ENCODE measurements at regions of chr6 and their contacts with region 1.

Region 1: DNA sequence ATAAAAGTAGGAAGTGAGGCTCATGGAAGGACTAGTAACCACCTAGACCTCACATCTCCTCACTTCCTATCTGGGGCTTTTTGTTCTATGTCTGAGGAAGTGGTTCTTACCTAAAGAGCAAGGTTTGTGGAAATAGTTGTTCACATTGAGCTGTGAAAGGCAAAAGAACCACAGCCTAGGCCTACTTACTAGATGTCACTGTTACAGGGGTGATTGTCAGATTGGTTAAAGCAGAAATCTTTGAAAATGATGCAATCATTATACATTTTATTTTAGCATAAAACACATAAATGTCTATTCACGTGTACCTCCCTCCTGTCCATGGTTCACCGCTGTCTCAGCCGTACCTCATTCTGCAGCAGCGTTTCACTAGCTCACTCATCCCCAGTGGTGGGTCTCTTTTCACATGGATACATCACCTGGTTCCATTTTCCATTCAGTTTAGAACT is 268.8 kb downstream of the TMEM242 start:
- DNase-seq: peak; percentile 76
- ATAC-seq: peak; percentile 90
- H3K4me3 ChIP-seq: no peak overlapping the region
- H3K4me3 Mint-ChIP-seq: peak overlapping the region; percentile 27
- H3K27ac ChIP-seq: peak overlapping the region; percentile 42 to 81
- H3K27ac Mint-ChIP-seq: peak overlapping the region; percentile 73
- H3K4me1 ChIP-seq: peaks cover 17 to 24% of the 10 kb centered on the region in 2 donors
- H3K4me1 Mint-ChIP-seq: peaks cover 53% of the 10 kb centered on the region
- H3K27me3 ChIP-seq: no peaks in the 10 kb centered on the region
- H3K27me3 Mint-ChIP-seq: no peaks in the 10 kb centered on the region
- CTCF ChIP-seq: no peak

Region 2: DNA sequence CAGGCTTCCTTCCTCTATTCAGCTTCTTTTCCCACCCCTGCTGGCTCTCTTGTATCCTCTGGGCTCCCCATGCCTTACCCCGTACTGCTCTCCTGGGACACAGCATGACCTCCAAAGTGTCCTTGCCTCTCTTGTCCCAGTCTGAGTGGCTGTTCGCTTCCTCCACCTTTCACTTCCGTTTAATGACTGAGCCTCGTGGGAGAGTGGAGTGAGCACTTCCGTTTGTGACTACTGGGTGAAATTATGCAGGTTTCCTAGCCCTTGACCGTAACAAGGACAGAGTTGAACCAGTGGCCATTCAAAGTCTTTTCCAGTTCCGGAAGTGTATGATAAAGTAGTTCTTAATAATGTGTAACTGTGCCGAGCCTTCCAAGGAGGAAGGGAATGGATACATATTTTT is 168.1 kb before region 1 on chr6:
- CTCF ChIA-PET with region 1: no interaction called
- POLR2A ChIA-PET with region 1: no interaction called
- intact Hi-C with region 1: no loop called
- DNase-seq: peak; percentile 32
- ATAC-seq: peak; percentile 28
- H3K4me3 ChIP-seq: no peak overlapping the region
- H3K4me3 Mint-ChIP-seq: peak overlapping the region; percentile 17
- H3K27ac ChIP-seq: peak overlapping the region in 1 of 2 donors; percentile 32
- H3K27ac Mint-ChIP-seq: peak overlapping the region; percentile 5
- H3K4me1 ChIP-seq: peaks cover 47 to 50% of the 10 kb centered on the region in 2 donors
- H3K4me1 Mint-ChIP-seq: peaks cover 84% of the 10 kb centered on the region
- H3K27me3 ChIP-seq: no peaks in the 10 kb centered on the region
- H3K27me3 Mint-ChIP-seq: no peaks in the 10 kb centered on the region
- CTCF ChIP-seq: no peak

Region 3: DNA sequence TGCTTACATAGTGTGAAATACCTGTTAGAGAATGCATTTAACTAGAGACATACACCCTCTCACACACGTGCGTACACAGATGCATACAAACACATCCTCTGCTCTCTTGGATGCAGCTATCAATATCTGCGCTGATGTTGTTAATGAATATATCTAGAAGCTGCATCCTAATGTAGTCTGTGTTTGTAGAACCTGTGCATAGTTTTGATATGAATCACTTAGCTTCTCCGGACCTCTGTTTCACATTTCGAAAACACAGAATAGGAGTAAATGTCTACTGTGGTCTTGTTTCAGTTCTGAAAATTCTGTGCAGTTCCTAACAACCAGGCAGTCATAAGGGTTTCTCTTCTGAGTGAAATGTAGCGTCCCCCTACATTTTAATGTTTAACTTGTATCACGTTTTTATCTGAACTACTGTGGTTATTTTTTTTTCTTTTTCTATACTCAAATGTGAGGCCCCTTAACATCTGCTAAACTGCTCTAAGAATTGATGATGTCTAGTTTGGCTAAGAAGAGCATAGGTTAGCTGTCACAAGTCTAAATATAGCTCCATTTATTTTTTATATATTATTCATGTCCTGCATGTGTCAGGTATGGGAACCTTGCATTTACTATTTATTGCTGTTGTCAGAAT is 14.3 kb after region 1 on chr6:
- CTCF ChIA-PET with region 1: interaction called, 12 read pairs
- POLR2A ChIA-PET with region 1: interaction called, 5 read pairs
- intact Hi-C with region 1: no loop called
- DNase-seq: no peak
- ATAC-seq: peak; percentile 53
- H3K4me3 ChIP-seq: no peak overlapping the region
- H3K4me3 Mint-ChIP-seq: peak overlapping the region; percentile 62
- H3K27ac ChIP-seq: peak overlapping the region in 1 of 2 donors; percentile 7
- H3K27ac Mint-ChIP-seq: peak overlapping the region; percentile 33
- H3K4me1 ChIP-seq: peaks cover 45 to 50% of the 10 kb centered on the region in 2 donors
- H3K4me1 Mint-ChIP-seq: peaks cover 77% of the 10 kb centered on the region
- H3K27me3 ChIP-seq: no peaks in the 10 kb centered on the region
- H3K27me3 Mint-ChIP-seq: no peaks in the 10 kb centered on the region
- CTCF ChIP-seq: no peak

Region 4: DNA sequence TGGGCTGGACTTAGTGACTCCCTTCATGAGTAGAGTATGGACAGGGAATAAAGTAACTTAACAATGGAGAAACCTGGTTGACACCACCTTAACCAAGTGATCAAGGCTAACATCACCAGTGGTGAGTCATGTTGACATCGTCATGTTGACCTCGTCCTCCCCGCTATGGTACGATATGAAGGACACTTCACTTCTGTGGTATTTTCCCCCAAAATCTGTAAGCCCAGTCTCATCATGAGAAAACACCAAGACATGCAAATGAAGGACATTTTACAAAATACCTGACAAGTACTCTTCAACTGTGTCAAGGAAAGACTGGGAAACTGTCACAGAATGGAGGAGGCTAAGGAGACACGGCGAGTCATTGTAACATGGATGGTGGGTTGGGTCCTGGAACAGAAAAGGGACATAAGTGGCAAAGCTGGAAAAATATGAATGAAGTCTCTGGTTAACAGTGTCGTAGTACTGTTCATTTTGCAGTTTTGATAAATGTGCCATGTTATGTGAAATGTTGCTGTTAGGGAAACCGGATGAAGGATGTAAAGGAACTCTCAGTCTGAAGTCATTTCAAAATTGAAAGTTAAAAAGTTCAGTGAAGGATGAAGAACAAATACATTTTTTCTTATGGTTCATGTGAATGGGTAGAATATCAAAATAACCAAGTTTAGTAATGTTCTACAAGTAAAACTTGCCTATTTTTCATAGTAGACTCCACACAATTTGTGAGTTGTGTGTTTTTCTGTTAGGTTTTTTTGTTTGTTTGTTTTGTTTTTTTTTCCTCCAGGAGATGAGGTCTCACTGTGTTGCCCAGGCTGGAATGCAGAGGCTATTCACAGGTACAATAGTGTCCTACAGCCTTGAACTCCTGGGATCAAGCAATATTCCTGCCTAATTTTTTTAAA is 21.2 kb after region 1 on chr6:
- CTCF ChIA-PET with region 1: no interaction called
- POLR2A ChIA-PET with region 1: no interaction called
- intact Hi-C with region 1: loop called (anchors 2 kb)
- DNase-seq: no peak
- ATAC-seq: peak; percentile 28
- H3K4me3 ChIP-seq: peak overlapping the region in 1 of 5 experiments; percentile 36
- H3K4me3 Mint-ChIP-seq: peak overlapping the region; percentile 86
- H3K27ac ChIP-seq: peak overlapping the region; percentile 37 to 44
- H3K27ac Mint-ChIP-seq: peak overlapping the region; percentile 76
- H3K4me1 ChIP-seq: peaks cover 38 to 58% of the 10 kb centered on the region in 2 donors
- H3K4me1 Mint-ChIP-seq: peaks cover 78% of the 10 kb centered on the region
- H3K27me3 ChIP-seq: no peaks in the 10 kb centered on the region
- H3K27me3 Mint-ChIP-seq: no peaks in the 10 kb centered on the region
- CTCF ChIP-seq: no peak

Region 5: DNA sequence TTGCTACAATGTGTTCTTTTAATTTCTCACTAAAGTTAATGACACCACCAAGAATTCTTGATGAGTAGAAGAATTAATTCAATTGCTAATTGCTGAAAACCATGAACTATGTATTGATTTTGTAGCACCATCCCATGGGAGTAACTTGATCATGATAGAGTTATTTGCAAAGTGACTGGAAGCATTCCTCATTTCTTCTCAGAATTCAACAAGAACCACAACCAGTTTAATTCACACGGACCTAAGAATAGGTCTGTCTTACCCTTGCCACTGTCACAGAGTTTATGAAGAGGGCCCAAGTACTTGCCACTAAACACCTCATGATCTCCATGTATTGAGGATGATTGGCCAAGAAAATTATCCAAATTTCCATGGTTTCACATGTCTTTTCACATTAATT is 46.6 kb after region 1 on chr6:
- CTCF ChIA-PET with region 1: no interaction called
- POLR2A ChIA-PET with region 1: no interaction called
- intact Hi-C with region 1: no loop called
- DNase-seq: no peak
- ATAC-seq: no peak
- H3K4me3 ChIP-seq: no peak overlapping the region
- H3K4me3 Mint-ChIP-seq: no peak overlapping the region
- H3K27ac ChIP-seq: peak overlapping the region in 1 of 2 donors; percentile 76
- H3K27ac Mint-ChIP-seq: no peak overlapping the region
- H3K4me1 ChIP-seq: peaks cover 35 to 37% of the 10 kb centered on the region in 2 donors
- H3K4me1 Mint-ChIP-seq: peaks cover 55% of the 10 kb centered on the region
- H3K27me3 ChIP-seq: no peaks in the 10 kb centered on the region
- H3K27me3 Mint-ChIP-seq: no peaks in the 10 kb centered on the region
- CTCF ChIP-seq: no peak